Heart right ventricle (tissue), 16 donors: ENCODE measurements at regions of chr2 and their contacts with region 1.

Region 1: DNA sequence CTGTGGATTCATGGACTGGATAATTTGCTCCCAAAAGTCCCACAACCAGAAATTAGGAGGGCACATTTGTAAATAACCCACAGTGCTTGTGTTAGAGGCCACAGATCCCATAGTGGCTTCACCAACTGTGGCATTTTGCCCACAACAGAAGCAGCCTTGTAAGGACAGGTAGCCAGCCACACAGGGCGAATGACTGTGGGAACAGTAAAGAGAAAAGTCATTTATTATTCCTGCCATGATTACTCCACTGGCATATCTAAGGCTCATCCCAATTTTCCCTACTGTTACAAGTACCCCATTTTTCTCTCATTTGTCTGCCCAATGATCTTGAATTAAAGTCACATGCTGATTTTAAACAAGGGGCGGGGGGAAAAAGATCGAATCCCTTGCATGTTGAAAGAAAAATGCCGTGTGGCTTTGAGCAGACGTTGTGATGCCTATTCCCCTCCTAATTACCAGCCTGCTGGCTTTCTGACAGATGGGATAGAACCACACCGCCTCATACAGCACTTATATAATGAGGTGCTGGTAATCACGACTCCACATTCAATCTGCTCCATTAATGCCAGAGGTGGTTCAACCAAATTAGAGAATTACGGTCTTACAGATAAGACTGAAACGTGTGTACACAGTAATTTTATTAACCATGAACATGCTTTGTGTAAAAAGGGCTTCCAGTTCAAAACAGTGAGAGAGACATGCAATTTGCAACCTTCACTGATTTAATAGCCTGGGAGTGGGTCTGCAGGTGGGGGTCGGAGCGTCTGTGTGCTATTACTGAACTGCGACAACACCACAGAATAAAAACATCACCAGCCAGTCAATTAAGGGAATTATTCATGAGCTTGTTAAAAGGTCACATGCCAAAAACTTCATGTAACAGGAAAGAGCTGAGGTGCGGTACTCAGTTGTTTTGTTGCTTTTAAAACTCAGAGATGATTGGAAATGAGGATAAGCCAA is 196.0 kb downstream of the TMEM163 start:
- DNase-seq: no peak
- ATAC-seq: no peak
- H3K4me3 ChIP-seq: no peak overlapping the region
- H3K27ac ChIP-seq: no peak overlapping the region
- H3K4me1 ChIP-seq: peaks cover 0 to 5% (median 0%) of the 10 kb centered on the region in 9 donors
- H3K27me3 ChIP-seq: peaks cover 0 to 5% (median 0%) of the 10 kb centered on the region in 7 donors
- CTCF ChIP-seq: no peak

Region 2: DNA sequence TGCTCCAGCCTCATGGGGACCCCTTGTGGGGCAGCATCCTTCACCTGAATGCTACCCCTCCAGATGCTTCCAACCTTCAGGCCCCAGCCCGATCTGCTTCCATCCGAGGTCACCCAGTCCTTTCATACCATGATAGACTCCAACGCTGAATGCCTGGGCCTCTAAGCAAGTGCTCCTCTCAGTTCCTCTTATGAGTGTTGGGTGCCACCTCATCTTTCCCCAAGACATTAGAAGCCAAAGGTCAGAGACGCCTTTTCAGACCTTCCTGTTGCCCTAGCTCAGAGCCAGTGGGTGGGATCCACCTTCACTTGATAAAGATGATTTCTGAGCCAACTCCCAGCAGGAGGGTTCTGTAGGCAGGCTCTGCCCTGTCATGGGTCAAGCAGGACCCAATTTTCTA is 443.4 kb before region 1 on chr2:
- intact Hi-C with region 1: loop called in 1 of 10 experiments (anchors 10 kb)
- DNase-seq: no peak
- ATAC-seq: no peak
- H3K4me3 ChIP-seq: no peak overlapping the region
- H3K27ac ChIP-seq: peak overlapping the region in 2 of 10 donors; percentile 29 to 67
- H3K4me1 ChIP-seq: peaks cover 0 to 33% (median 5%) of the 10 kb centered on the region in 9 donors
- H3K27me3 ChIP-seq: no peaks in the 10 kb centered on the region
- CTCF ChIP-seq: no peak